ENCODE measurements at regions of chr2 and their contacts with region 1.

Region 1: GRCh38 chr2:128027801-128028667 is at the start of gene SAP130:
- DNase-seq: peak; percentile 98
- ATAC-seq: peak; percentile 77
- H3K4me3 ChIP-seq: peak within 1 kb of the TSS; percentile 38 to 93 (median 87)
- H3K4me3 Mint-ChIP-seq: peak within 1 kb of the TSS; percentile 97
- H3K27ac ChIP-seq: peak within 1 kb of the TSS; percentile 68 to 81
- H3K27ac Mint-ChIP-seq: peak within 1 kb of the TSS; percentile 97
- H3K4me1 ChIP-seq: peaks cover 13 to 14% of the 10 kb centered on the region in 2 donors
- H3K4me1 Mint-ChIP-seq: peaks cover 20% of the 10 kb centered on the region
- H3K27me3 ChIP-seq: no peaks in the 10 kb centered on the region
- H3K27me3 Mint-ChIP-seq: peaks cover 5% of the 10 kb centered on the region
- CTCF ChIP-seq: no peak
- total RNA-seq, gene SAP130: 35.2 and 40.1 TPM in 2 replicates

Region 2: DNA sequence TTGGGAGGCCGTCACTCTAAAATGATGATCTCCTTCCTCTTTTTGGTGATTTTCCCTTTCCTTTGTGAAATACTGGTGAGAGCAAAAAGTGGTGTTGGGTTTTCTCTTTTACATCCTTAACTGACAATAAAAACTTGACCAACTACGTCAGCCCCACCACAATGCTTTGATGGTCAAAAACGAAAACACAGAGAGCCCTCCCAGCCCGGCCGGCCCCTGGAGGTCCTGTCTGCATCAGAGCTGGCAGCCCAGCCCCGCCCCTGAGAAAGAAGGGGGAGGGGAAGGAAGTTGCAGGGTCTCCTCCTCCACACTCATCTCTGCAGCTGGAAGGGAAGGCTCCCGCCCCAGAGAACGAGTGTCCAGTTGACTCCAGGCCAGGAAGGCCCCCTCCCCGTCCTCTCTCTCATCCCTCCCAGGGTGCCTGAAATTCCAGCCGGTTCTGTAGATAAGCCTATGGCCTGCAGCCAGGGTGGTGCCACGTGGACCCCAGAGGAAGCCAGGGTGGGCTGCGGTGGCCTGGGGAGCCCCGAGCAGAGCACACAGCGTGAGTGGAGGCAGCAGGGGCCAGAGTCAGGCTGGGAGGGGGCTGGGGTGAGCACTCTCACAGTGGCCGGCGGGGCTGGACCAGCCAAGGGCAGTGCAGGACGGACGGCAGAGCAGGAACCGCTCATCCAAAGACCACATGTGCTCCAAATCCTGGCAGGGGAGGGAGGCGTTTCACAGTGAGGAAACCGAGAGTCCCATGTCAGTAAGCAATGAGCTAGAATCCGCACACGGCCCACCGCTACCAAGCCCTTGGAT is 940.8 kb before region 1 on chr2:
- CTCF ChIA-PET with region 1: no interaction called
- POLR2A ChIA-PET with region 1: no interaction called
- intact Hi-C with region 1: loop called (anchors 10 kb)
- DNase-seq: peak; percentile 76
- ATAC-seq: peak; percentile 1
- H3K4me3 ChIP-seq: peak overlapping the region in 4 of 5 experiments; percentile 23 to 72 (median 44)
- H3K4me3 Mint-ChIP-seq: peak overlapping the region; percentile 81
- H3K27ac ChIP-seq: peak overlapping the region; percentile 42 to 55
- H3K27ac Mint-ChIP-seq: peak overlapping the region; percentile 90
- H3K4me1 ChIP-seq: peaks cover 53 to 62% of the 10 kb centered on the region in 2 donors
- H3K4me1 Mint-ChIP-seq: peaks cover 61% of the 10 kb centered on the region
- H3K27me3 ChIP-seq: no peaks in the 10 kb centered on the region
- H3K27me3 Mint-ChIP-seq: no peaks in the 10 kb centered on the region
- CTCF ChIP-seq: no peak

Region 3: DNA sequence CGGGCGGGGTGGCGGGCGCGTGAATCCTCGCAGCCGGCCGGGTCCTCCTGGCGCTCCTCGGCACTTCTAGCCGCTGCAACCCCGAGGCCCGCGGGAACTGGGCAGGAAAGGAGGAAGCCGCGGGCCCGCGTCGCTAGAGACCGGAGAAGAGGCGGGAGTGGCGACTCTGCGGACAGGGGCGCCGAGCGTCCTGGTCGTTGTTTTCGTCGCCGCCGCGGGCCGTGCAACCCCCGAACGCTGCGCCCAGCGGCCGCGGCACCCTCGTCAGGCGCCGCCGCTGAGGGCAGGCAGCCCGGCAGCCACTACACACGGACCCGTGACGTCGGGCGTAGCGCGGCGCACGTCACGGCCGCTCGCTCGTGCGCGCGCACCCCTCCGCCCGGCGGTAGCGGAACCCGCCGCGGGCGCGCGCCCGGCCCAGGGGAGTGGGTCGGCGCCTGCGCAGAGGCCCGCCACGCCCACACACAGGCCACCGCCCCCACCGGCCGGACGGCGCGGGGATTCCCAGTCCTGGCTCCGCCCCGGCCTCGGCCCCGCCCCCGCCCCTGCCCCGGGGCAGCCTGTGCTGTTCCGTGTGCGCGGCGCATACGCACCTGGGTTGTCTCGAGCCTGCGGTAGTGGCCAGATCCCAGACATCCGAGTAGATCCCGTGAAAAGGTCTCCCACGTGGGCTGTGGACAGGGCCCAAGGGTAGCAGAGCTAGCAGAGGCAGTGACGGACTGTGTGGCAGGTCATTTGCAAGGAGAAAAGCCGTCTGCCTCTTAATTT is 640.2 kb before region 1 on chr2 and contains the start of gene MAP3K2:
- CTCF ChIA-PET with region 1: no interaction called
- POLR2A ChIA-PET with region 1: no interaction called
- intact Hi-C with region 1: loop called (anchors 5 kb)
- DNase-seq: peak; percentile 97
- ATAC-seq: peak; percentile 74
- H3K4me3 ChIP-seq: peak within 1 kb of the TSS; percentile 73 to 95 (median 80)
- H3K4me3 Mint-ChIP-seq: peak within 1 kb of the TSS; percentile 92
- H3K27ac ChIP-seq: peak within 1 kb of the TSS; percentile 97 to 99
- H3K27ac Mint-ChIP-seq: peak within 1 kb of the TSS; percentile 99
- H3K4me1 ChIP-seq: peaks cover 50 to 57% of the 10 kb centered on the region in 2 donors
- H3K4me1 Mint-ChIP-seq: peaks cover 80% of the 10 kb centered on the region
- H3K27me3 ChIP-seq: no peaks in the 10 kb centered on the region
- H3K27me3 Mint-ChIP-seq: no peaks in the 10 kb centered on the region
- CTCF ChIP-seq: no peak
- total RNA-seq, gene MAP3K2: 112 and 118 TPM in 2 replicates

Region 4: DNA sequence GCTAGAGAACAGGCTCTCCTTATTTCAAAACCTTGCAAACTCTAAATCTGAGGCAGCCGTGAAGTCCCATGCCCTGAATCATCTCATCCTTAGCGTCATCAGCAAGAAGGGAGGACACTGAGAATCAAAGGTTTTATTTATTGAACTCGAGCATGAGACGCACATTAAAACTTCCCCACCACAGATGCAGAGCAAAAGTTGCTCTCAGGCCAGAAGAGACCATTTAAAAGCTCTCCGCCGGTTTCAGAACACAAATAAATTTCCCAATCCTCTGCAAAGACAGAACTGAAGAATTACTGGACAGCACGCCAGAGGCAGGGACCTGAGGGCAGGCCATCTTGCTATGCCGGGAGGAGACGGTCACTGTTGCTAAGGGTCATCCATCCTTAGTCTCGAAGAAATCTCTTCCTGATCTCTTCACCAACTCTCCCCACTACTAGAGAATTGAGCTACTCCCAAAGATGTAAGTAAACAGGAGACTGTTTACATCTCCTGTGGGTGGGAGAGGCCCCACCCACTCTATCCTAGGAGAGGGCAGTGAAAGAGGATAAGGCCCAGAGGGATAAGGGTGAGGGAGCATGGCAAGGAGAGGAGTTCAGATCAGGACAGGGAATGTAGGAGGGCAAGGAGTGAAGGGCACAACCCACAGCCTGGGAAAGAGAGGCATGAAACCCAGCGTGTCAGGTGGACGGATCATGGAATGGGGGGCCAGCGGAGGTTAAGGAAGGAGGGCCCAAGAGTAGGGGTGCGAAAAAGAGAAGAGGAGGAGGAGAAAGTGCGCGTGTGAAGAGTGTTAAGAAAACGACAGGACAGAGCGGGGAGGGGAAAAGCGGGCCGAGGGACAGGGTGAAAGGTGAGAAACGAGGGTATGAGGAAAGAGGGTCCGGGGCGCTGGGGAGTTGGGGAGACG is 143.3 kb before region 1 on chr2:
- CTCF ChIA-PET with region 1: no interaction called
- POLR2A ChIA-PET with region 1: no interaction called
- intact Hi-C with region 1: loop called (anchors 2 kb)
- DNase-seq: peak; percentile 29
- ATAC-seq: no peak
- H3K4me3 ChIP-seq: peak overlapping the region in 4 of 5 experiments; percentile 21 to 55 (median 45)
- H3K4me3 Mint-ChIP-seq: peak overlapping the region; percentile 91
- H3K27ac ChIP-seq: peak overlapping the region in 1 of 2 donors; percentile 45
- H3K27ac Mint-ChIP-seq: peak overlapping the region; percentile 84
- H3K4me1 ChIP-seq: peaks cover 15 to 21% of the 10 kb centered on the region in 2 donors
- H3K4me1 Mint-ChIP-seq: peaks cover 33% of the 10 kb centered on the region
- H3K27me3 ChIP-seq: no peaks in the 10 kb centered on the region
- H3K27me3 Mint-ChIP-seq: no peaks in the 10 kb centered on the region
- CTCF ChIP-seq: no peak

Region 5: DNA sequence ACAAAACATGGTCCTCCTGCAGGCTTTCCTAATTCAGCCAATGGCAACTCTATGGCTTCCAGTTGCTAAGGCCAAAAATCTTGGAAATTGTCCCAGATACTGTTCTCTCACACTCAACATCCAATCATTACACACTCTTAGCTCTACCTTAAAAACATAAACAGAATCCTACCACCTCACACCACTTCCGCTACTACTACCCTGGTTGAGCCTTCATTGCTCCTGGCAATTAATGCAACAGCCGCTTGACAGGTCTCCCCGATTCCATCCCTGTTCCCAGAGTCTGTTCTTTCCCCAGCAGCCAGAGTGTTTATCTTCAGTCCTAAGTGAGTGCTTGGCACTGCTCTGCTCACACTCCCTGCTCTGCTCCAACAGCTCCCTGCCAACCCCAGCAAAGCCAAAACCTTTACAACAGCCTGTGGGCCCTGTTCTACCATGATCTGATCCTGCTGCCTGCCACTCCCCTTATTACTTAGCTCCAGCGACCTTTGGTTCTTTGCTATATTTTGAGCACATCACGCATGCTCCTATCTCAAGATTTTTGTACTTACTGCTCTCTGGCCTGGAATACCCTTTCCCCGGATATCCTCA is 74.8 kb before region 1 on chr2:
- CTCF ChIA-PET with region 1: no interaction called
- POLR2A ChIA-PET with region 1: no interaction called
- intact Hi-C with region 1: no loop called
- DNase-seq: no peak
- ATAC-seq: no peak
- H3K4me3 ChIP-seq: no peak overlapping the region
- H3K4me3 Mint-ChIP-seq: no peak overlapping the region
- H3K27ac ChIP-seq: no peak overlapping the region
- H3K27ac Mint-ChIP-seq: no peak overlapping the region
- H3K4me1 ChIP-seq: peaks cover 8 to 9% of the 10 kb centered on the region in 2 donors
- H3K4me1 Mint-ChIP-seq: peaks cover 9% of the 10 kb centered on the region
- H3K27me3 ChIP-seq: no peaks in the 10 kb centered on the region
- H3K27me3 Mint-ChIP-seq: no peaks in the 10 kb centered on the region
- CTCF ChIP-seq: no peak

Region 6: GRCh38 chr2:128321784-128322714 is 294.0 kb after region 1 on chr2:
- CTCF ChIA-PET with region 1: no interaction called
- POLR2A ChIA-PET with region 1: no interaction called
- intact Hi-C with region 1: loop called (anchors 5 kb)
- DNase-seq: peak; percentile 91
- ATAC-seq: peak; percentile 52
- H3K4me3 ChIP-seq: peak overlapping the region; percentile 31 to 67 (median 52)
- H3K4me3 Mint-ChIP-seq: peak overlapping the region; percentile 78
- H3K27ac ChIP-seq: no peak overlapping the region
- H3K27ac Mint-ChIP-seq: peak overlapping the region; percentile 71
- H3K4me1 ChIP-seq: peaks cover 15 to 21% of the 10 kb centered on the region in 2 donors
- H3K4me1 Mint-ChIP-seq: peaks cover 20% of the 10 kb centered on the region
- H3K27me3 ChIP-seq: peaks cover 0 to 10% (median 0%) of the 10 kb centered on the region in 4 experiments
- H3K27me3 Mint-ChIP-seq: no peaks in the 10 kb centered on the region
- CTCF ChIP-seq: peak; percentile 96